ENCODE measurements at regions of chr2 and their contacts with region 1.

Region 1: GRCh38 chr2:197378494-197379307 is 56.1 kb downstream of the SF3B1 start:
- DNase-seq: peak in 7 of 10 donors; percentile 21 to 87 (median 55)

Region 2: DNA sequence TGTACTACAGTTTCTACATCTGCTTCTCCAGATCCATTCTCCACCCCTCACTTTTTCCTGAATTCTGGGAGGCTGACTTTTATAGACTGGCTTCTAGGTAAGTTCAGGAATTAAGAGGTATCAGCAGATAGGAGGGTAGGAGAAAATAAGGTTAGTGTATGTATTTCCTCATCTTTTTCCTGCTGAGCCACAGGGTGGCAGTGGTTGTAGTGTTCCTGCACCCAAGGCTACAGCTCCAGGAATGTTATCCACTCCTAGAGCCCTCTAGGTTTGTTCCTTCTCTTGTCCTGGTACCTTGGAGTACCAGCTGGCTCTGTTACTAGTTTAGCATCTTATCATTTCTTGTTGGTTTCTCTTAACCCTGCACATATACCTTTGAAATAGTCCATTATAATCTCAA is 528.8 kb before region 1 on chr2:
- intact Hi-C with region 1: loop called (anchors 2 kb)
- DNase-seq: peak in 5 of 10 donors; percentile 19 to 88 (median 41)

Region 3: DNA sequence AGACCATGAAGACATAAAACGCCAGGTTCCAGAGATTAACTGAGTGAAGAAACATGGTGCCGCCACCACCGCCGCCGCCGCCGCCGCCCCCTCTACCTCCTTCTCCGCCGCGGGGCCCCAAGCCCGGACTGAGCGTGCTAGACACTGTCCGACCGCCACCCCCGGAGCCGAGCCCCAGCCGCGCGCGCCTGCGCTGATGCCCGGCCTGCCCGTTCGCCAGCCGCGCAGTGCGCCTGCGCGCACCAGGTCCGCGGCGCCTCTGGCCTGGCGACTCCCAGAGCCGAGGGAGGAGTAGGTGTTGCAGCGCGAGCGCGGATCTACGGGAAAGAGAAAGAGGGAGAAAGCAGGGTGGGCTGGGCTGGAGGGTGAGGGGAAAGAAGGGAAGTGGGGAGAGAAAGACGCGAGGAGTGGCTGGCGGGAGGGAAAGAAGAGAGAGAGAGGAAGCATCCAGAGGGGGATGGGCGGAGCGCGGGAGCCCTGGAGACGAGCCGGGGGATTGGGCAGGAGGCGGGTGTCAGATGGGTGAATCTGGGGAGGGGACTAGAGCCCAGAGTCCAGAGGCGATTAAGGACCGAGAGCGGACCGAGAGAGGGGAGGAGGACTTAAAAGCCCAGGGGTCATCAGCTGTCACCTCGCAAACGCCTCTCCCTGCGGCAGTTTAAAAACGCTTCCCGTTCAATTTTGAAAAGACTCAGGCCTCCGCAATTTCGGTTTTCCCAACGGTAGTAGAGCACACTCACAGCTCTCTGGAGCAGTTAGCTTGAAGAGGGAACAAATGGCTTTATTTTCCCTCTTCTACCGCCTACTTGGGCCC is 451.9 kb before region 1 on chr2 and contains the start of gene PGAP1:
- intact Hi-C with region 1: loop called (anchors 5 kb)
- DNase-seq: peak; percentile 81 to 97 (median 86)

Region 4: GRCh38 chr2:197011799-197012641 is 366.7 kb before region 1 on chr2:
- intact Hi-C with region 1: loop called (anchors 5 kb)
- DNase-seq: peak in 2 of 10 donors; percentile 39 to 57

Region 5: DNA sequence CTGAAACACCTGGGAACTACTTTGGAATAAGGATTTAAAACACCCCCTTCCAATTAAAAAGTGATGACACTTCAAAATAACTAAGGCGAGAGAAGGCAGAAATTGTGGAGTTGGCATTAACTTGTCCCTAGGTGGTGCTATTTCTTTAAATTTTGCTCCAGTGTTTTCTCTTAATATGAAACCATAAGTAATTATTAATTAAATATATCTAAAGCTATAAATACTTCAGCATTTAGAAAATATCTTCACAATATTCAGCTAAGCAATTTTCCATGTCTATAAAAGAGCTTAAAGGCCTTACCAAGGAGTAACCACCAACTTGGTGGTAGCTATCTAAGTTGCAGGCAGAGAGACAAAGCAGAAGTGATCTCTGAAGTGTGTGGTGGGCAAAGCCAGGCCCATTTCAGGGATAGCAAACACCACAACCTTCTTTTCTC is 265.4 kb before region 1 on chr2:
- intact Hi-C with region 1: loop called (anchors 1 kb)
- DNase-seq: no peak

Region 6: DNA sequence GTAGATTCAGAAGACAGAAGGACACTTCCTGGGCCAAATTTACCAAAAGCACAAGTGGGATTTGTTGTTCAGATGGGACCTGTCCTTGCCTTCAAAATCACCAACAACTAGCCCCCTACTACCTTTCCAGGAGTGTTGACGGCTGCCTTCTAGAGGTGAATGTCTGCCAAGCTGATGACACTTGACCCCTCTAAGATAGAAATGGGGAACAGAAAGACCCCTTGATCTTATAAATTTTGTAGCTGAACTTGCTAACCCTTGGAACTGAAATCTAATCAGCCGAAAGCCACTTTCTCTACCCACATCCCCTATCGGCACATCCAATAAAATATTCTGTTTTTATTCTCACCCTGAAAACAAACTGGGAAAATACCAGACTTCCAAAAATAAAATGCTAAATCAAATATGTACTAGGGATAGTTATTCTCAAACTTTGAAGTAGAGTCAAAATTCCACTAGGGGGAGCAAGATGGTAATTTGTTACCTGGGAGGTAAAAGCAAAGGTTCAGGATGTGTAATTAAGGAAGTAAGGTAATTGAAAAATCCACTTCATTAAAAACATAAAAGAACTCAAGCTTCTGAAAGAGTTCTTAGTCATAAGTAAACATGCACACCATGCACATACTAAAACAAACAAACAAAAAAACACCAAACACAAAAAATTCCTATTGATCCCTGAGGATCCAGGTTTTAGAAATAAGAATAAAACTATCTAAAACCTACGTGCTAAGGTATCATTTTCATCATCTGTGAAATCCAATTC is 187.3 kb before region 1 on chr2:
- intact Hi-C with region 1: loop called (anchors 2 kb)
- DNase-seq: no peak